Ascending aorta (tissue), 2 donors: ENCODE measurements at regions of chr14 and their contacts with region 1.

Region 1: GRCh38 chr14:33938131-33938949 is 12.5 kb downstream of the EGLN3 start:
- DNase-seq: peak; percentile 29 to 76
- H3K4me3 ChIP-seq: peak overlapping the region in 1 of 2 donors; percentile 46
- H3K27ac ChIP-seq: peak overlapping the region; percentile 42 to 73
- H3K4me1 ChIP-seq: peaks cover 0 to 19% of the 10 kb centered on the region in 2 donors
- H3K27me3 ChIP-seq: no peaks in the 10 kb centered on the region
- CTCF ChIP-seq: no peak

Region 2: DNA sequence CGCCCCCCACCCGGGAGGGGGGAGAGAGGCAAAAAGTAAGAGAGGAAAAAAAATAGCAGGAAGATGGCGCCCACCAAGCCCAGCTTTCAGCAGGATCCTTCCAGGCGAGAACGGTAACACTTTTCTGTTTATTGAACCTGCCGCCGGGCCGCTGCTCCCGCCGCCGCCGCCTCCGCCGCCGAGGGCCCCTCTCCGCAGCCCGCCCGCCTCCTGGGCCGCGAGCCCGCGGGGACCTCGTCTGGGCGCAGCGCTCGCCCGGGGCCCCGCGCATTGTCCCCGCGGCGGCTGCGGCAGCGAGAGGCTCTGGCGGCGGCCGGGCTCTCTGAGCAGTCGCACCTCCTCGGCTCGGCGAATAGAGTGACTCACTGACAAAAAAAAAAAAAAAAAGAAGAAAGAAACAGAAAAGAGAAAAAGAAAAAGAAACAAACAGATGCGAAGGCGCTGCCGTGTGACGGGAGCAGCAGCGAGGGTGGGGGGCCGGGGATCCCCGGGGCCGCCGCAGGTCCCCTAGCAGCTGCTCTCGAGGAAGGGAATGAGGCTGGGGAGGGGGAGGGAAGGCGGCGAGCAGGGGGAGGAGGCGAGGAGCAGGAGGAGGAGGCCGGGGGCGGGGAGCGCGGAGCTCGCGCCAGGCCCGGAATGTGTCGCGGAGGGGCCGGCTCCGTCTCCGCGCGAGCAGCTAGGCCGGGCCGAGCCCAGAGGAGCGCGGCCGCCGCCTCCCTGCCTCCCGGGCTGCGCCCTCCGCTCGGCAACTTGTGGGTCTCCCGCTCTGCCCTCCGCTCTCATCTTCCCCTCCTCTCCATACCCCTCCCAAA is 998.9 kb before region 1 on chr14:
- intact Hi-C with region 1: loop called (anchors 10 kb)
- DNase-seq: peak in 1 of 2 donors; percentile 86
- H3K4me3 ChIP-seq: peak overlapping the region; percentile 72 to 80
- H3K27ac ChIP-seq: peak overlapping the region; percentile 81 to 94
- H3K4me1 ChIP-seq: peaks cover 3 to 10% of the 10 kb centered on the region in 2 donors
- H3K27me3 ChIP-seq: no peaks in the 10 kb centered on the region
- CTCF ChIP-seq: no peak

Region 3: GRCh38 chr14:33792720-33793368 is 145.5 kb before region 1 on chr14:
- intact Hi-C with region 1: no loop called
- DNase-seq: peak in 1 of 2 donors; percentile 81
- H3K4me3 ChIP-seq: peak overlapping the region; percentile 29 to 54
- H3K27ac ChIP-seq: peak overlapping the region; percentile 44
- H3K4me1 ChIP-seq: no peaks in the 10 kb centered on the region
- H3K27me3 ChIP-seq: no peaks in the 10 kb centered on the region
- CTCF ChIP-seq: peak; percentile 74 to 94 (median 94)

Region 4: DNA sequence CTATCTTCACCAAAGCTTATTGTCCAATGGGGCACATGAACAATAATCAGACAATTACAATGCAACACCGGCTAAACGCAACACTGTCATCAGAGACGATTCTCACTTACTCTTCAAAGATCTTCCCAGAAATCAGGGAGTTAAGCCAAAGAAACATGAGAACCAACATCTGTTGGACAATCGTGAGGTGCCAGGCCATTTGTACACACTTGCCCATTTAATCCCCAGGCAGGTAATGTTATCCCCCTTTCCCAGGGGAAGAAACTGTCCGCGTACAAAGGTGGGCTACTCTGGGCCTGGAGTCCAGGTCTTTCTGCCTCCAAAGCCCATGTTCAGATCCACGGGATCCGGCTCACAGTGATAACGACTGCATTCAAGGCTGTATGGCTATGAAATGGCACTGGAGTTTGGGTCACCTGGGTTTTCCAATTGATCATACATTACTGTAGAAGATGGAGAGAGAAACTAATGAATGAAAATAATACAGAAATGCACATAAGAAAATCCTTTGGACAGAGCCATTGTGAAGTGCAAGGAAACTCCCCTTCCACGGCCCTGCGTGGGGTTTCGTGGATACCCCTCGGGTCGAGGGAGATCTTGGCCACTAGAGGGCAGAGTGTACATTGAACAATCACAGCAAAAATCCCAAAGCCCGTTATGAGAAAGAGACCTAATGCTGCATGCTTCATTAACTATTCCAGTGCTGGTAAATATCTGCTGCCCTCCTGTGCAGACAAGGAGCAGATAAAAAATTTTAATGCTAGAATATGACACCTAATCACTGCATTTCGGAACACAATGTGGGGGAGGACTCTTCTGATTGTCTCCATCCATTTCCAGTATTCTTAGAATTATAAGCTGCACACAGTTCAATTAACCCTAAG is 98.9 kb before region 1 on chr14:
- intact Hi-C with region 1: no loop called
- DNase-seq: peak in 1 of 2 donors; percentile 75
- H3K4me3 ChIP-seq: no peak overlapping the region
- H3K27ac ChIP-seq: no peak overlapping the region
- H3K4me1 ChIP-seq: peaks cover 0 to 4% of the 10 kb centered on the region in 2 donors
- H3K27me3 ChIP-seq: no peaks in the 10 kb centered on the region
- CTCF ChIP-seq: peak; percentile 75 to 84 (median 79)

Region 5: GRCh38 chr14:33924566-33925100 is 13.7 kb before region 1 on chr14:
- intact Hi-C with region 1: loop called (anchors 2 kb)
- DNase-seq: no peak
- H3K4me3 ChIP-seq: no peak overlapping the region
- H3K27ac ChIP-seq: no peak overlapping the region
- H3K4me1 ChIP-seq: no peaks in the 10 kb centered on the region
- H3K27me3 ChIP-seq: no peaks in the 10 kb centered on the region
- CTCF ChIP-seq: no peak